Naive thymus-derived CD4-positive, alpha-beta T cell (primary cell): ENCODE measurements at regions of chr7 and their contacts with region 1.

Region 1: DNA sequence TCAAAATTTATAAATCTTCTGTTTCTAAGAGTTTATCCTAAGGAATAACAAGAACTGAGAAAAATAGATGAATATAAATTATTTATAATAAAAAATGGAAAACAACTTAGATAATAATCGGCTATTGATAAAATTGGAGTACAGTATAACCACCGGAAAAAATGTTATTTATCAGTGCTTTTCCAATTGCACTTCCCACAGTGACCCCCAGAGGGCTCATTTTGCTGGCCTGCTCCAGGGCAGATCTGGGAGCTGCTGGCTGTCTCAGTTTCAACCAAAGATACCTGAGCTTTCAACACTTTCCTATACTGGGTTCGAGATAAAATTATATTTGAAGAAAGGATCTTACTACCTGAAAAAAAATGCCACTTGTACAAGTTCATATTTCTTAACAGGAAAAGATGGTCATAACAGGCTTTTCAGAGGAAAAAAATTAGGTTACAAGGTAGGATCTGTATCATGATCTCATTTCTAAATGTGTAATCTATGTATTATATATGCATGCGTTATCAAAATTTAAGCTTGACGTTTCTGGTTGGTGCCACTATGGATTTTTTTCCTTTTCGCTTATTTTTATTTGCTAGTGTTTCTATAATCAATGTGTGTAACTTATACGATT is 165.7 kb downstream of the NPSR1 start:
- DNase-seq: peak in 7 of 9 donors; percentile 5 to 43 (median 38)
- ATAC-seq: peak; percentile 67
- H3K4me3 ChIP-seq: no peak overlapping the region
- H3K4me3 Mint-ChIP-seq: no peak overlapping the region
- H3K27ac ChIP-seq: no peak overlapping the region
- H3K27ac Mint-ChIP-seq: no peak overlapping the region
- H3K4me1 ChIP-seq: no peaks in the 10 kb centered on the region
- H3K4me1 Mint-ChIP-seq: peaks cover 0 to 2% (median 0%) of the 10 kb centered on the region in 7 donors
- H3K27me3 ChIP-seq: no peaks in the 10 kb centered on the region
- H3K27me3 Mint-ChIP-seq: peaks cover 0 to 10% (median 4%) of the 10 kb centered on the region in 5 donors

Region 2: DNA sequence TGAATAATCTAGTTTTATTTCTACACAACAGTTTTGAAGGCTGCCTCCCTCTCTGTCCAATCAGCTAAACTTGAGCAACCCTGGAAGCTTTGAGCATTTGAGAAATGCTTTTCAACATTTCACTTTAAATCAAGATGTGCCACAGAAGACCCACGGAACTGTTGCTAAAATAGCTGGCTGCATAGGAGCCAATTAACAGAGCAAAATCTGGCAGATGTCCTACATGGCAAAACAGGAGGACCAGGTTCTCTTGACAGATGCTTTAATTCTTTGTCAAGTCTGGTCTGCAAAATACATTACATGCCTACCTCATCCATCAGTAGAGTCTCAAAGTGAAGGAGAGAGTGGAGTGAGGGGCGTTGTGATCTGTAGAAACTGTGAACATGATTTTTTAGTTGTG is 27.7 kb after region 1 on chr7:
- CTCF ChIA-PET with region 1: no interaction called
- POLR2A ChIA-PET with region 1: no interaction called
- intact Hi-C with region 1: no loop called
- DNase-seq: no peak
- ATAC-seq: no peak
- H3K4me3 ChIP-seq: no peak overlapping the region
- H3K4me3 Mint-ChIP-seq: no peak overlapping the region
- H3K27ac ChIP-seq: no peak overlapping the region
- H3K27ac Mint-ChIP-seq: no peak overlapping the region
- H3K4me1 ChIP-seq: no peaks in the 10 kb centered on the region
- H3K4me1 Mint-ChIP-seq: no peaks in the 10 kb centered on the region
- H3K27me3 ChIP-seq: no peaks in the 10 kb centered on the region
- H3K27me3 Mint-ChIP-seq: peaks cover 2 to 47% (median 30%) of the 10 kb centered on the region in 5 donors

Region 3: DNA sequence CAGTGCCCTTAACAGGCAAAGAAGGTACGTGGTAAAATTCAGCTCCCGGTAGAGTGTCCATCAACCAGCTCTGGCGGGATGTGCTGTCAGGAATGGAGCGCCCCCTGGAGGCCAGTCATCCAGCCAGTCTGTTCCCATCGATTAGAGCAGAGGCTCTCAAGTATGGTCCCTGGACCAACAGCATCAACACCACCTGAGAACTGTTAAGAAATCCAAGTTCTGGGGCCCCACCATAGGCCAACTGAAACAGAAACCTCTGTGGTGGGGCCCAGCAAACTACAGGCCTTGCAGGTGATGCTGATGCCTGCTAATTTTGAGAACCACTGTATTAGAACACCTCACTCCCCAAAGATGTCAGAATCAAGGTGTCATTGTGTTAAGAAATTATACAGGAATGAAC is 104.3 kb after region 1 on chr7:
- CTCF ChIA-PET with region 1: no interaction called
- POLR2A ChIA-PET with region 1: no interaction called
- intact Hi-C with region 1: loop called (anchors 2 to 5 kb)
- DNase-seq: peak in 5 of 9 donors; percentile 6 to 37 (median 8)
- ATAC-seq: no peak
- H3K4me3 ChIP-seq: no peak overlapping the region
- H3K4me3 Mint-ChIP-seq: no peak overlapping the region
- H3K27ac ChIP-seq: no peak overlapping the region
- H3K27ac Mint-ChIP-seq: no peak overlapping the region
- H3K4me1 ChIP-seq: no peaks in the 10 kb centered on the region
- H3K4me1 Mint-ChIP-seq: no peaks in the 10 kb centered on the region
- H3K27me3 ChIP-seq: no peaks in the 10 kb centered on the region
- H3K27me3 Mint-ChIP-seq: peaks cover 0 to 9% (median 0%) of the 10 kb centered on the region in 5 donors

Region 4: GRCh38 chr7:35519971-35520809 is 696.4 kb after region 1 on chr7:
- CTCF ChIA-PET with region 1: no interaction called
- POLR2A ChIA-PET with region 1: no interaction called
- intact Hi-C with region 1: loop called (anchors 1 to 5 kb)
- DNase-seq: peak in 6 of 9 donors; percentile 38 to 47 (median 40)
- ATAC-seq: peak; percentile 79
- H3K4me3 ChIP-seq: no peak overlapping the region
- H3K4me3 Mint-ChIP-seq: no peak overlapping the region
- H3K27ac ChIP-seq: no peak overlapping the region
- H3K27ac Mint-ChIP-seq: no peak overlapping the region
- H3K4me1 ChIP-seq: no peaks in the 10 kb centered on the region
- H3K4me1 Mint-ChIP-seq: peaks cover 0 to 6% (median 4%) of the 10 kb centered on the region in 7 donors
- H3K27me3 ChIP-seq: no peaks in the 10 kb centered on the region
- H3K27me3 Mint-ChIP-seq: peaks cover 0 to 33% (median 17%) of the 10 kb centered on the region in 5 donors

Region 5: GRCh38 chr7:35624299-35625186 is 800.8 kb after region 1 on chr7:
- CTCF ChIA-PET with region 1: no interaction called
- POLR2A ChIA-PET with region 1: no interaction called
- intact Hi-C with region 1: loop called in 1 of 2 experiments (anchors 10 kb)
- DNase-seq: peak; percentile 6 to 47 (median 33)
- ATAC-seq: peak; percentile 88
- H3K4me3 ChIP-seq: no peak overlapping the region
- H3K4me3 Mint-ChIP-seq: peak overlapping the region in 5 of 10 donors; percentile 7 to 35 (median 17)
- H3K27ac ChIP-seq: no peak overlapping the region
- H3K27ac Mint-ChIP-seq: peak overlapping the region in 1 of 9 donors; percentile 26
- H3K4me1 ChIP-seq: peaks cover 0 to 4% of the 10 kb centered on the region in 2 donors
- H3K4me1 Mint-ChIP-seq: peaks cover 2 to 8% (median 5%) of the 10 kb centered on the region in 7 donors
- H3K27me3 ChIP-seq: no peaks in the 10 kb centered on the region
- H3K27me3 Mint-ChIP-seq: no peaks in the 10 kb centered on the region